MCF 10A (cell line): ENCODE measurements at regions of chr6 and their contacts with region 1.

Region 1: DNA sequence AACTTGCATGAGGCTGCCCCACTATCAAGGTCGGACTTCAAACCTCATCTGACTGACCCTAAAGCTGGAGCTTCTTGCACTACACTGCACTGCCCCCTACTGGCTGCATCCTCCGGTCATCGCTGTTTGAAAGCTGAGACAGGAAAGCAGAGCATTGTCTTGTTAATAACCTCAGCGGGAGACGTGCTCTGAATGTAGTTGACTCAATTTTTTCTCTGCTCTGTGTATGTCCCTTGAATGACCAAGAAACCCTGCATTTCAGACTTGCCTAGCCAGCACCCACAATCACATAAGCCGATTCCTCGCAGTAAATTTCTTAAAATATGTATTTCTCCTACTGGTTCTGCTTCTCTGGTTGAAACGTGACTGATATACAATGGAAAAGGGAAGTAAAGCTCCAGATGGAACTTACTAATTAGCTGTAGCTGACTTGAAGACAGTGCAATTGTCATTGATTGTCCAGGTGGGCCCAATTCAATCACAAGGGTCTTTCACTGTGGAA is 27.8 kb downstream of the TCF21 start:
- DNase-seq: peak; percentile 89
- H3K4me3 Mint-ChIP-seq: no peak overlapping the region
- H3K27ac Mint-ChIP-seq: no peak overlapping the region
- H3K4me1 Mint-ChIP-seq: peaks cover 14% of the 10 kb centered on the region
- H3K27me3 Mint-ChIP-seq: no peaks in the 10 kb centered on the region
- CTCF ChIP-seq: peak; percentile 87

Region 2: DNA sequence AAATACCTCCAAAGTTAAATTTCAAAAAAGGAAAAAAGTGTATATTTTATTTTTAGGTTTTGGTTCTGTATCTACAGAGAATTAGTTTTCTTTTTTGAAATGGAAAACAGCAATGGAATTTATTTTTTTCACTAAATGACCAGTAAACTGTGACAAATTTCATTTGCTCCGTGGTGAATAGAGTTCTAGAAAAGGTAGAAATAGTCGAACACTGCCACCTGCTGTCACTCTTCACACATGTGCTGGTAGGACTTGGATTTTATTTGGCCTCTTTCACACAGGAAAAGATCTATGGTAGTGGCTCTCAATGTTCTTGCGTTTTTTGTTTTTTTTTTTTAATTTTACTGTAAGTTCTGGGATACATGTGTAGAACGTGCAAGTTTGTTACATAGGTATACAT is 363.0 kb before region 1 on chr6:
- CTCF ChIA-PET with region 1: interaction called, 12 read pairs
- POLR2A ChIA-PET with region 1: no interaction called
- intact Hi-C with region 1: no loop called
- DNase-seq: peak; percentile 70
- H3K4me3 Mint-ChIP-seq: no peak overlapping the region
- H3K27ac Mint-ChIP-seq: no peak overlapping the region
- H3K4me1 Mint-ChIP-seq: peaks cover 12% of the 10 kb centered on the region
- H3K27me3 Mint-ChIP-seq: no peaks in the 10 kb centered on the region
- CTCF ChIP-seq: peak; percentile 61

Region 3: DNA sequence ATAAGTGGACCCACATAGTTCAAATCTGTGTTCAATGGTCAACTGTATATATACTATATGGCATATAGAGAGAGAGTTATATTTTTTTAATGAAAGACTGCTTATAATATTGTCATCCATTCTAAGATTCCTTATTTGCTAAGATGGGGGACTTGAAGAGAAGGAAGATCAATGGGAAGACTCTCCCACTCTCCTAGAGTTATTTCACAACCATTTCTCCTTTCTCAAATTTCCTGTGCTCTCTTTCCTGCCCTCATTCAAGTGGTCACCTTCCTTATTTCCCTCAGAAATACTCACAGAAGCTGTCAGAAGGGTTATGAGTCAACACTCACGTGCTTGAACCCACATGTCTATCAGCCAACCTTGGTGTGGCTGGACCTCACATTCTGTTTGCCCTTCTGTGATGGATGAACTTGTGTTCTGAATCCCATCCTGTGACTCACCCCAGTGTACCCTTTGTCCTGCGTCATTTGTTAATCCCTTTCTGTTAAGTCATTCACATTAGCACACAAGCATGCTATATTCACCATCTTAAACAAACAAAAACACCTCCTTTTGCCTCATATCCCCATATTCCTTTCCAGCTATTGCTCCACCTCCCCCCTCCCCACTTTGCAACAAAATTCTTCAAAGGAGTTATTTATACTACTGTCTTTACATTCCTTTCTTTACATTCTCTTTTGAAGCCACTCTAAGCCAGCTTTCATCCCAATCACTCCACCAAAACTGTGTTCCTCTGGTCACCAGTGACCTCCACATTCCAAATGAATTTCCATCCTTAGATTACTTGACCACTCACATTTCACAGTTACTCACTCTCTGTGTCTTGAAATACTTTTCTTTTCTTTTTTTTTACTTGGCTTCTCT is 307.1 kb before region 1 on chr6:
- CTCF ChIA-PET with region 1: interaction called, 8 read pairs
- POLR2A ChIA-PET with region 1: interaction called, 4 read pairs
- intact Hi-C with region 1: loop called (anchors 5 kb)
- DNase-seq: peak; percentile 100
- H3K4me3 Mint-ChIP-seq: no peak overlapping the region
- H3K27ac Mint-ChIP-seq: no peak overlapping the region
- H3K4me1 Mint-ChIP-seq: no peaks in the 10 kb centered on the region
- H3K27me3 Mint-ChIP-seq: no peaks in the 10 kb centered on the region
- CTCF ChIP-seq: no peak

Region 4: GRCh38 chr6:133752129-133752528 is 164.6 kb before region 1 on chr6:
- CTCF ChIA-PET with region 1: no interaction called
- POLR2A ChIA-PET with region 1: no interaction called
- intact Hi-C with region 1: no loop called
- DNase-seq: no peak
- H3K4me3 Mint-ChIP-seq: no peak overlapping the region
- H3K27ac Mint-ChIP-seq: no peak overlapping the region
- H3K4me1 Mint-ChIP-seq: no peaks in the 10 kb centered on the region
- H3K27me3 Mint-ChIP-seq: no peaks in the 10 kb centered on the region
- CTCF ChIP-seq: no peak

Region 5: DNA sequence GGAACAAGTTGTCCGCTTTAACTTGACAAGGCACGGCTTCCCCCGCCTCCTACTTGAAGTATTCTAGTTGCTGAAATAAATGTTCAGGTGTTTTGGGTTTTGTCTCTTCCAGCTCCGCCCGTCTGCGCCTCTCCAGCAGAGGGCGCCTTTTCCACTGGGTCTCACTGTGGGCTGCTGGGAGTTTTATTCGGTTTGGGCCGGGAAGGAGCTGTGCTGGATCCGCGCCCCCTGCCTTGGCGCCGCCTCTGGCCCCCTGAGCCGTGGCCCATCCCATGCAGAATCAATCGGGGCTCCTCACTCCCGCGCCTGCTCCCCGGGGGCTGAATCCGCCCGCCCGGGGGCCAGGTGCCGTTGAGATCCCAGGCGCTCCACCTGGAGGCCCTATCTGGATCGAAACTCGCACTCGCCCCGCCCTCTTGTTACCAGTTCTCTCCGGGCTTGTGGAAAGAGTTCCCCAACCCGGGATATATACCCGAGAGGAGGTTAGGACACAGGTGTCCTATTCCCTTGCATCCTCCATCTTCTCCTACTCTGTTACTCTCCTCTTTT is 78.8 kb before region 1 on chr6:
- CTCF ChIA-PET with region 1: interaction called, 20 read pairs
- POLR2A ChIA-PET with region 1: no interaction called
- intact Hi-C with region 1: loop called (anchors 2 kb)
- DNase-seq: peak; percentile 50
- H3K4me3 Mint-ChIP-seq: peak overlapping the region; percentile 55
- H3K27ac Mint-ChIP-seq: no peak overlapping the region
- H3K4me1 Mint-ChIP-seq: peaks cover 6% of the 10 kb centered on the region
- H3K27me3 Mint-ChIP-seq: no peaks in the 10 kb centered on the region
- CTCF ChIP-seq: peak; percentile 47

Region 6: DNA sequence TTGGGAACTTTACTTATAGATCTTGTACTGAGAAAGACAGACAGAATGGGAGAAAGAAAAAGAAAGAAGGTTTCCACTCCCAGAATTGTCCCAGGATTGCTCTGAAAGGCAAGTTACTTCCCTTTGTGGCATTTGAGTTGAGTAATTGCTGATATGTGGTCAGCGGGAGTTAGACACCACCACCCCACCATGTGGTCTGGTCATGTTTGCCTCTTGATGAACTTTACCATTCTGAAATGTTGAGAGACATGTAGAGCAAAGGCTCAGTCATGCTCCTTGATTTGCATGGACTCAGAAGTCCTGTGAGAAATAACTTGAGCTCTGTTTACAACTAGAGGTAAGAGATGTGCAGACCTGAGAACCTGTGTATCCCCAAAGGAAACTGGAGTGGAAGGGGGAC is 10.7 kb before region 1 on chr6:
- CTCF ChIA-PET with region 1: interaction called, 16 read pairs
- POLR2A ChIA-PET with region 1: no interaction called
- intact Hi-C with region 1: no loop called
- DNase-seq: no peak
- H3K4me3 Mint-ChIP-seq: no peak overlapping the region
- H3K27ac Mint-ChIP-seq: no peak overlapping the region
- H3K4me1 Mint-ChIP-seq: no peaks in the 10 kb centered on the region
- H3K27me3 Mint-ChIP-seq: no peaks in the 10 kb centered on the region
- CTCF ChIP-seq: no peak